ENCODE measurements at regions of chr5 and their contacts with region 1.

Region 1: GRCh38 chr5:180315762-180316212 is 23.9 kb upstream of the MAPK9 start:
- DNase-seq: peak; percentile 35
- ATAC-seq: peak; percentile 97
- H3K4me3 ChIP-seq: no peak overlapping the region
- H3K27ac ChIP-seq: no peak overlapping the region
- H3K4me1 ChIP-seq: no peaks in the 10 kb centered on the region
- H3K27me3 ChIP-seq: no peaks in the 10 kb centered on the region
- CTCF ChIP-seq: peak; percentile 76
- POLR2A ChIP-seq: no peak
- RAD21 ChIP-seq: peak; percentile 49

Region 2: DNA sequence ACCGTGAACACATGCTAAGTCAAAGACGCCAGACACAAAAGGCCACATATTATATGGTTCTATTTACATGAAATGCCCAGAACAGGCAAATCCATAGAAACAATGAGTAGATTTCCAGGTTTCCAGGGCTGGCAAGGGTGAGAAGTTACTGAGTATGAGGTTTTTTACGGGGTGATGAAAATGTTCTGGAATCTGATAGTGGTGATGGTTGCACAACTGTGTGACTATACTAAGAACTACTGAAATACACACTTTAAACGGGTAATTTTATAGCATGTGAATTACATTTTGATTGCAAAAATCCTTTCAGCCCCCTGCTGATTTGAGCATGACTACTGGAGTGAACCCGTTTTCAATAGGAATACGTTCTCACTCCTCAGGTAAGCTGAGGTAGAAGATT is 361.4 kb before region 1 on chr5:
- CTCF ChIA-PET with region 1: no interaction called
- POLR2A ChIA-PET with region 1: no interaction called
- dilution Hi-C with region 1: no loop called
- in situ Hi-C with region 1: no loop called
- intact Hi-C with region 1: no loop called
- DNase-seq: peak; percentile 42
- ATAC-seq: no peak
- H3K4me3 ChIP-seq: no peak overlapping the region
- H3K27ac ChIP-seq: no peak overlapping the region
- H3K4me1 ChIP-seq: no peaks in the 10 kb centered on the region; the same call in 1 of the 2 replicates
- H3K27me3 ChIP-seq: no peaks in the 10 kb centered on the region
- CTCF ChIP-seq: no peak
- POLR2A ChIP-seq: no peak
- RAD21 ChIP-seq: no peak

Region 3: GRCh38 chr5:180179442-180180420 is 136.1 kb before region 1 on chr5:
- CTCF ChIA-PET with region 1: no interaction called
- POLR2A ChIA-PET with region 1: no interaction called
- dilution Hi-C with region 1: no loop called
- in situ Hi-C with region 1: no loop called
- intact Hi-C with region 1: no loop called
- DNase-seq: no peak
- ATAC-seq: no peak
- H3K4me3 ChIP-seq: no peak overlapping the region
- H3K27ac ChIP-seq: no peak overlapping the region
- H3K4me1 ChIP-seq: peaks cover 8% of the 10 kb centered on the region; the same call in 1 of the 2 replicates
- H3K27me3 ChIP-seq: peaks cover 12% of the 10 kb centered on the region; the same call in 1 of the 2 replicates
- CTCF ChIP-seq: no peak
- POLR2A ChIP-seq: no peak
- RAD21 ChIP-seq: no peak

Region 4: DNA sequence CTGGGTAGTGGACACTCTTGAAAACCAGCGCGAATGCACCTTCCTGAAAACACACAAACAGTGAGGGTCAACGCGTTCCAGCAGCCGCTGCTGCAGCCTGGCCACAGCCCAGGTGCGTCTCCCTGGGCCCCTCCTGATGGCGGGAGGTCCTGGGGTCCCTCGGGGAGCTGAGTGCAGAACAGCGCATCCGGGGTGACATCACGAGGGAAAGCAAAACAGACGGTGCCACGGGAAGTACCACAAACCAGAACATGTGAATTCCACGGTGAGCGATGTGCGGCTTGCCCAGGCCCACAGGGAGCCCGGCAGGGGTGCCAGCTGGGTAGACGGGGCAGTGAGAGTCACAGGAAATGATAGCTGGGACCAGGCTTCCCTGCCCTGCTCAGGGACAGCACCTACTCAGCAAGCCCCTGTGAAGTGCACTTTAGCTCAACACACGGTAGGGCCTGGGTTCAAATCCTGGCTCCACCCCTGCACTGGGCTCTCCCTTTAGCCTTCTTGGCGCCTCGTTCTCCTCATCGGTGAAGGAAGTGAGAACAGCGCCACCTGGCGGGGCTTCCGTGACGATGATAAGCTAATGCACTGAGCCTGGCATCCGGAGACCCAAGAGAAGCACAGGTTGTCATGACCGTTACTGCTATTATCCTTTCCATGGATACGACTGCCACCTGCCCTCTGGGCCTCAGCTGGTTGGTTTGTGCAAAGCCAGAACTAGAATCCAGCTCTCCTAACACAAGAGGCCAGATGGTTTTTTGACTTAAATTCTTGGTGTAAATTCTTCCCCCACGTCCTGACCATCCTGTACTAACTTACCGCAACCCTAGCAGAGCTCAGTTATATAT is 12.7 kb after region 1 on chr5:
- CTCF ChIA-PET with region 1: interaction called, 12 read pairs
- POLR2A ChIA-PET with region 1: no interaction called
- dilution Hi-C with region 1: no loop called
- in situ Hi-C with region 1: no loop called
- intact Hi-C with region 1: no loop called
- DNase-seq: peak; percentile 60
- ATAC-seq: no peak
- H3K4me3 ChIP-seq: no peak overlapping the region
- H3K27ac ChIP-seq: no peak overlapping the region
- H3K4me1 ChIP-seq: peaks cover 18% of the 10 kb centered on the region
- H3K27me3 ChIP-seq: no peaks in the 10 kb centered on the region
- CTCF ChIP-seq: peak; percentile 56
- POLR2A ChIP-seq: no peak
- RAD21 ChIP-seq: peak; percentile 51

Measured in IMR-90 (cell line).